ENCODE measurements at regions of chr4 and their contacts with region 1.

Region 1: GRCh38 chr4:150874338-150875226 is 140.5 kb downstream of the LRBA start:
- DNase-seq: peak; percentile 71
- ATAC-seq: peak; percentile 99

Region 2: GRCh38 chr4:149999485-150000074 is 875.0 kb before region 1 on chr4:
- intact Hi-C with region 1: loop called (anchors 5 kb)
- DNase-seq: no peak
- ATAC-seq: peak; percentile 76

Region 3: DNA sequence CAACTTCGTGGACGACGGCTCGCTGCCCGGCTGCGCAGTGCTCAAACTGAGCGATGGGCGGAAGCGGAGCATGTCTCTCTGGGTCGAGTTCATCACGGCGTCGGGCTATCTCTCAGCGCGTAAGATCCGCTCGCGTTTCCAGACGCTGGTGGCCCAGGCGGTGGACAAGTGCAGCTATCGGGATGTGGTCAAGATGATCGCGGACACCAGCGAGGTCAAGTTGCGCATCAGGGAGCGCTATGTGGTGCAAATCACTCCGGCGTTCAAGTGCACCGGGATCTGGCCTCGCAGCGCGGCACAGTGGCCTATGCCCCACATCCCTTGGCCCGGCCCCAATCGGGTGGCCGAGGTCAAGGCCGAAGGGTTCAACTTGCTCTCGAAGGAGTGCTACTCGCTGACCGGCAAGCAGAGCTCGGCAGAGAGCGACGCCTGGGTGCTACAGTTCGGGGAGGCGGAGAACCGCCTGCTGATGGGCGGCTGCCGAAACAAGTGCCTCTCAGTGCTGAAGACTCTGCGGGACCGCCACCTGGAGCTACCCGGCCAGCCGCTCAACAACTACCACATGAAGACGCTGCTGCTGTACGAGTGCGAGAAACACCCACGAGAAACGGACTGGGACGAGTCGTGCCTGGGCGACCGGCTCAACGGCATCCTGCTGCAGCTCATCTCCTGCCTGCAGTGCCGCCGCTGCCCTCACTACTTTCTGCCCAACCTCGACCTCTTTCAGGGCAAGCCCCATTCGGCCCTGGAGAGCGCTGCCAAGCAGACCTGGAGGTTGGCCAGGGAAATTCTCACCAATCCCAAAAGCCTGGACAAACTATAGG is 291.1 kb before region 1 on chr4:
- intact Hi-C with region 1: no loop called
- DNase-seq: peak; percentile 63
- ATAC-seq: peak; percentile 68

Region 4: DNA sequence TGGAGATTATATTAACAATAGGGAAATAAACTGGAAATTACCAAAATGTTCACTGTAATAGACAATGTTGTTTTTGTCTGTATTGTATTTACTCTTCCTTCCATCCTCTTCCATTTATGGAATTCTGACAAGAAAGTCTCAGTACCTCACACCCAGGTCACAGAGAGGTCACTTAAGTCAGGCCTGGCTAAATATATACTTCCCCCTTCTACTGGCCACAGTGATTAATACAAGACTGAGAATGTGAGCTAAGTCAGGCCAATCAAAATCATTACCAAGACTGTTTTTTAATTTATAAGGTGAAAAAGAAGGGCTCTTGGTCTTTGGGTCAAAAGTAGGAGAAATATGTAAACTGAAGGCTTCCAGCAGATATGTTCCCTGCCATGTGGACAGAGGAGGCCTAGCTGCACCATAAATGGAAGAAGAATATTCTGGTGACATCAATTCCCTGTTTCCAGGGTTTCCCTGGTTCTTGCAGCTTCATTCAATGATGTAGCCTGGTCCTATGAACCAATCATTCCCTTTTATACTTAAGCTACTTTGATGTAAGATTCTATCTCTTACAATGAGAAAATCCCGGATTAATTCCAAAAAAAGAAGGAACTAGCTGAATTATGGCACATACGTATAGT is 76.2 kb after region 1 on chr4:
- intact Hi-C with region 1: loop called (anchors 10 kb)
- DNase-seq: no peak
- ATAC-seq: no peak